ENCODE measurements at regions of chr1 and their contacts with region 1.

Region 1: GRCh38 chr1:225652729-225653462 is at the start of gene ENAH:
- DNase-seq: peak; percentile 84 to 87
- ATAC-seq: peak; percentile 79 to 90 (median 88)
- H3K4me3 ChIP-seq: peak within 1 kb of the TSS; percentile 86 to 99 (median 94)
- H3K27ac ChIP-seq: peak within 1 kb of the TSS; percentile 95 to 100 (median 98)
- H3K4me1 ChIP-seq: peaks cover 0 to 59% (median 45%) of the 10 kb centered on the region in 9 donors
- H3K27me3 ChIP-seq: peaks cover 0 to 50% (median 0%) of the 10 kb centered on the region in 7 donors
- CTCF ChIP-seq: no peak
- total RNA-seq, gene ENAH: 63.3 to 201 (median 115) TPM

Region 2: DNA sequence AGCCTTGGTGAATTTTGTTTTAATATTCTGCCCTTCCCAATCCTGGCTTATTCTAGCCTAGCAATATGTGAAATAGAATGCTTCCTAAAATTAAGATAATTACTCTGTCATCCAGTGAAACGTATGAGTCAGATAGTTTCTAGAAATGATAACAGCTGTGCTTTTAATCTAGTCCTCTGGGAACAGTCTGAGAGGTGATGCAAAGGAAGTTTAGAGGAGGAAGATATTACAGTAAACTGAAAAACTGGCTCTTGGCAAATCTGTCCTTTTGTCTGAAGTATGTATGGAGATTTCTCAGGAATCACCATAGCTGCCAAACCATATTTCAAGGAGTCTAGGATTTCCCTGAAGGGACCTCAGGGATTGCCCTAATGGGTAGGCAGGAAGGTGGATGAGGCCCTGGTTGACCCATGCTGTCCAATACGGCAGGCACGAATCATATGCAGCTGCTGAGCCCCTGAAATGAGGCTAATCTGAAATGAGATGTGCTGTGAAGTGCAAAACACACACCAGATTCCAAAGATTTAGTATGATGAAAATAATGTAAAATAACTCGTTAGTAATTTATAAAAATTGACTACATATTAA is 154.3 kb before region 1 on chr1:
- intact Hi-C with region 1: loop called in 2 of 10 experiments (anchors 10 kb)
- DNase-seq: no peak
- ATAC-seq: no peak
- H3K4me3 ChIP-seq: no peak overlapping the region
- H3K27ac ChIP-seq: peak overlapping the region in 1 of 10 donors; percentile 29
- H3K4me1 ChIP-seq: peaks cover 0 to 6% (median 0%) of the 10 kb centered on the region in 9 donors
- H3K27me3 ChIP-seq: no peaks in the 10 kb centered on the region
- CTCF ChIP-seq: no peak

Region 3: DNA sequence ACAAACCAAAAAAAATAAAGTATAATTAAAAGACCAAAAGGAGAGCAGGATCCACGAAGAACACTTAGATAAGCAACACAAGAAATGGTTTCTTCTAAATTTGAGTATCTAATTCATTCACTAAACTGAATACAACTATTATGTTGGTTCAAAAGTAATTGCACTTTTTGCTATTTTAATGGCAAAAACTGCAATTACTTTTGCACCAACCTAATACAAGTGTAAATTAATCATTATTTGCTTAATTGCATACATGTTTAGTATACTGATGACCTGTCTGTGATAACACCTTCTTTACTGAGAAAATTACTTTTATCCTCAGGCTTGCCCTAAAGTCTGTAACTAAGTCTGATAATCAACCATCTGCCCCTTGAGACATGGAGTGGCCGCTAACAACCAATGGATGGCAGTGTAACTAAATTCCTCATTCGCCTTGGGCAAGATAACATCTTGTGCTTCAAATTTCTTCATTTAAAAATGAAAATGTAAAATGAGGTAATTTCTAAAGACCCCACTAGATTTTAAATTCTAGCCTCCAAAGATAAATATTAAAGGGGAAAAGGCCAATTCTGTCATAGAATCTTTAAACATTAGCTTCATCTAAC is 85.2 kb before region 1 on chr1:
- intact Hi-C with region 1: loop called in 4 of 10 experiments (anchors 5 to 10 kb)
- DNase-seq: no peak
- ATAC-seq: no peak
- H3K4me3 ChIP-seq: no peak overlapping the region
- H3K27ac ChIP-seq: no peak overlapping the region
- H3K4me1 ChIP-seq: peaks cover 0 to 46% (median 23%) of the 10 kb centered on the region in 9 donors
- H3K27me3 ChIP-seq: no peaks in the 10 kb centered on the region
- CTCF ChIP-seq: peak in 5 of 9 donors; percentile 11 to 37 (median 25)

Region 4: GRCh38 chr1:225587310-225587709 is 65.6 kb before region 1 on chr1:
- intact Hi-C with region 1: no loop called
- DNase-seq: no peak
- ATAC-seq: no peak
- H3K4me3 ChIP-seq: no peak overlapping the region
- H3K27ac ChIP-seq: no peak overlapping the region
- H3K4me1 ChIP-seq: peaks cover 0 to 29% (median 11%) of the 10 kb centered on the region in 9 donors
- H3K27me3 ChIP-seq: no peaks in the 10 kb centered on the region
- CTCF ChIP-seq: no peak

Region 5: DNA sequence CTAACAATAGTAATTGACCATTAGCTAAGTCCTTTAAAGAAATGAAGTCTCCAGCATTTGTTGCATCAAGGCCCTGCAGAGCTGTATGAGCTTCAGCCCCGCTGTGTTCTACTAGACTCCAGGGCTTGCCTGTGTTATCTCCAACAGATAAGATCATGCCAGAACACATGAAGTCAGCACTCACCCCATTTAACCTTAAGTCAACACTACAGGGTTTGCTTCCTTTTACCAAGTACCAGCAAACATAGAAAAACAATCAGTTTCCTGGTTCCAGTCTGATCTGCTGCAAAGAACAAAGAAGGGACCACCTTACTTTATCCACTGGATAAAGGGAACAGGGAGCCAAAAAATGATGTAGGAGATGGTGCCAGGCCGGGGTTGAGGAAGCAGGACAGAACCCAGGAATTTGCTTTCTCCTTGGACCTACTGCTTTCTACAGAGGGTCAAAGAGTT is 41.3 kb after region 1 on chr1:
- intact Hi-C with region 1: loop called in 4 of 10 experiments (anchors 2 to 5 kb)
- DNase-seq: peak; percentile 24 to 62
- ATAC-seq: peak; percentile 82 to 94 (median 92)
- H3K4me3 ChIP-seq: no peak overlapping the region
- H3K27ac ChIP-seq: peak overlapping the region in 8 of 10 donors; percentile 28 to 86 (median 59)
- H3K4me1 ChIP-seq: peaks cover 10 to 77% (median 59%) of the 10 kb centered on the region in 9 donors
- H3K27me3 ChIP-seq: no peaks in the 10 kb centered on the region
- CTCF ChIP-seq: no peak

Region 6: GRCh38 chr1:225766967-225767633 is 114.2 kb after region 1 on chr1:
- intact Hi-C with region 1: loop called in 8 of 10 experiments (anchors 2 to 10 kb)
- DNase-seq: peak in 1 of 2 donors; percentile 65
- ATAC-seq: peak; percentile 29 to 77 (median 52)
- H3K4me3 ChIP-seq: no peak overlapping the region
- H3K27ac ChIP-seq: peak overlapping the region; percentile 46 to 89 (median 77)
- H3K4me1 ChIP-seq: peaks cover 27 to 94% (median 72%) of the 10 kb centered on the region in 9 donors
- H3K27me3 ChIP-seq: no peaks in the 10 kb centered on the region
- CTCF ChIP-seq: no peak

Region 7: GRCh38 chr1:226019572-226019971 is 366.7 kb after region 1 on chr1:
- intact Hi-C with region 1: no loop called
- DNase-seq: no peak
- ATAC-seq: no peak
- H3K4me3 ChIP-seq: no peak overlapping the region
- H3K27ac ChIP-seq: no peak overlapping the region
- H3K4me1 ChIP-seq: peaks cover 0 to 4% (median 0%) of the 10 kb centered on the region in 9 donors
- H3K27me3 ChIP-seq: no peaks in the 10 kb centered on the region
- CTCF ChIP-seq: no peak

Measured in heart right ventricle (tissue), 16 donors.